ENCODE measurements at regions of chr7 and their contacts with region 1.

Region 1: GRCh38 chr7:5396999-5397663 is 26.5 kb downstream of the TNRC18 start:
- DNase-seq: peak; percentile 92 to 96 (median 95)
- H3K4me3 ChIP-seq: peak overlapping the region; percentile 81 to 85
- H3K4me3 Mint-ChIP-seq: peak overlapping the region; percentile 82 to 93 (median 86)
- H3K27ac ChIP-seq: peak overlapping the region; percentile 90
- H3K27ac Mint-ChIP-seq: peak overlapping the region; percentile 95 to 99 (median 96)
- H3K4me1 ChIP-seq: peaks cover 27% of the 10 kb centered on the region
- H3K4me1 Mint-ChIP-seq: peaks cover 13 to 44% (median 34%) of the 10 kb centered on the region in 4 donors
- H3K27me3 ChIP-seq: no peaks in the 10 kb centered on the region
- H3K27me3 Mint-ChIP-seq: no peaks in the 10 kb centered on the region

Region 2: GRCh38 chr7:5363729-5364128 is 33.4 kb before region 1 on chr7:
- CTCF ChIA-PET with region 1: interaction called, 30 read pairs
- POLR2A ChIA-PET with region 1: no interaction called
- intact Hi-C with region 1: loop called (anchors 1 kb)
- DNase-seq: no peak
- H3K4me3 ChIP-seq: no peak overlapping the region
- H3K4me3 Mint-ChIP-seq: peak overlapping the region in 4 of 8 donors; percentile 16 to 40 (median 30)
- H3K27ac ChIP-seq: no peak overlapping the region
- H3K27ac Mint-ChIP-seq: peak overlapping the region in 5 of 7 donors; percentile 9 to 44 (median 12)
- H3K4me1 ChIP-seq: peaks cover 7% of the 10 kb centered on the region
- H3K4me1 Mint-ChIP-seq: peaks cover 11 to 26% (median 20%) of the 10 kb centered on the region in 4 donors
- H3K27me3 ChIP-seq: no peaks in the 10 kb centered on the region
- H3K27me3 Mint-ChIP-seq: no peaks in the 10 kb centered on the region

Region 3: DNA sequence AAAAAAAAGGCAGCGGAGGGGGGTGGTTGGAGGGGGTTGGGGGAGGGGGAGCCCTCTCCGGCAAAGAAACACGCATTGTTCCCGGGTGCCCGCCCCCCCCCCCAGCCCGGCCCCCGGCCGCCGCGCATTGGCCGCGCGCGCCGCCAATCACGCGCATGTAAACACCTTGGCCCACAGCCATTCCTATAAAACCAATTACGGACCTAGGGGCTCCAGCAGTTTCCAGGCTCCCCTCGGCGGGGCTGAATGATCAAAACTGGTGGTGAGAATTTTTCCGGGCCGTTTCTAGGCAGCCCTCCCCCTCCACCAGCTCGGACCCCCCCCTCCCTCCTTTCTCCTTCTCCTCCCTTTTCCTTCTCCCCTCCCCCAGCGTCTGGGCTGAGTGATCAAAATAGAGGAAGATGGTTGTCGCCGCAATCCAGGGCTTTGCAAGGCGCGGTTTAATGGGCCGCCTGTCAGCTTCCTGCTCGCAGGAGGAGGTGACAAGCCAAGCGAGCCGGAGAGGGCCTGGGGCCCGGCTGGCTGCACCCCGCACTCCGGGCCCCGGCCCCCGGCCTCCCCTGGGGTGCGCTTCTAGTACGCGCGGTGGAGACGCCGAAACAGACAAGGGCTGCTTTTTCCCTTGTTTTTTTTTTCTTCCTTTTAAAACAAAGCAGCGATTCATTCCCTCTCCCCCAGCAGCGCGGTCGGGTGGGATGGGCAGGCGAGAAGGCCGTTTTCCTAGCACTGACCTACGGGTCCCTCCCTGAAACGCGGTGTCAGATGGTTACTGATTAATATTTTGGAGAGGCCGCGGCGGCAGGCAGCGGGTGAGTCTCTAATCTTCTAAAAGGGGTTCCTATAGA is 26.9 kb after region 1 on chr7:
- CTCF ChIA-PET with region 1: interaction called, 18 read pairs
- POLR2A ChIA-PET with region 1: interaction called, 44 read pairs
- intact Hi-C with region 1: loop called (anchors 1 kb)
- DNase-seq: peak; percentile 32 to 56 (median 44)
- H3K4me3 ChIP-seq: peak overlapping the region in 1 of 2 donors; percentile 9
- H3K4me3 Mint-ChIP-seq: peak overlapping the region; percentile 80 to 95 (median 86)
- H3K27ac ChIP-seq: no peak overlapping the region
- H3K27ac Mint-ChIP-seq: peak overlapping the region in 5 of 7 donors; percentile 70 to 86 (median 81)
- H3K4me1 ChIP-seq: peaks cover 85% of the 10 kb centered on the region
- H3K4me1 Mint-ChIP-seq: peaks cover 14 to 64% (median 31%) of the 10 kb centered on the region in 4 donors
- H3K27me3 ChIP-seq: peaks cover 56% of the 10 kb centered on the region
- H3K27me3 Mint-ChIP-seq: peaks cover 18 to 42% of the 10 kb centered on the region in 2 donors

Region 4: GRCh38 chr7:5442757-5443305 is 45.7 kb after region 1 on chr7:
- CTCF ChIA-PET with region 1: no interaction called
- POLR2A ChIA-PET with region 1: no interaction called
- intact Hi-C with region 1: no loop called
- DNase-seq: no peak
- H3K4me3 ChIP-seq: no peak overlapping the region
- H3K4me3 Mint-ChIP-seq: no peak overlapping the region
- H3K27ac ChIP-seq: no peak overlapping the region
- H3K27ac Mint-ChIP-seq: no peak overlapping the region
- H3K4me1 ChIP-seq: no peaks in the 10 kb centered on the region
- H3K4me1 Mint-ChIP-seq: no peaks in the 10 kb centered on the region
- H3K27me3 ChIP-seq: no peaks in the 10 kb centered on the region
- H3K27me3 Mint-ChIP-seq: no peaks in the 10 kb centered on the region

Region 5: GRCh38 chr7:5494683-5495561 is 97.8 kb after region 1 on chr7:
- CTCF ChIA-PET with region 1: interaction called, 15 read pairs
- POLR2A ChIA-PET with region 1: interaction called, 3 read pairs
- intact Hi-C with region 1: no loop called
- DNase-seq: peak; percentile 80 to 82 (median 81)
- H3K4me3 ChIP-seq: peak overlapping the region in 1 of 2 donors; percentile 40
- H3K4me3 Mint-ChIP-seq: peak overlapping the region in 7 of 8 donors; percentile 46 to 73 (median 53)
- H3K27ac ChIP-seq: no peak overlapping the region
- H3K27ac Mint-ChIP-seq: peak overlapping the region in 5 of 7 donors; percentile 15 to 86 (median 63)
- H3K4me1 ChIP-seq: peaks cover 16% of the 10 kb centered on the region
- H3K4me1 Mint-ChIP-seq: peaks cover 5 to 27% (median 15%) of the 10 kb centered on the region in 4 donors
- H3K27me3 ChIP-seq: no peaks in the 10 kb centered on the region
- H3K27me3 Mint-ChIP-seq: no peaks in the 10 kb centered on the region